WTC11 (cell line): ENCODE measurements at regions of chr12 and their contacts with region 1.

Region 1: DNA sequence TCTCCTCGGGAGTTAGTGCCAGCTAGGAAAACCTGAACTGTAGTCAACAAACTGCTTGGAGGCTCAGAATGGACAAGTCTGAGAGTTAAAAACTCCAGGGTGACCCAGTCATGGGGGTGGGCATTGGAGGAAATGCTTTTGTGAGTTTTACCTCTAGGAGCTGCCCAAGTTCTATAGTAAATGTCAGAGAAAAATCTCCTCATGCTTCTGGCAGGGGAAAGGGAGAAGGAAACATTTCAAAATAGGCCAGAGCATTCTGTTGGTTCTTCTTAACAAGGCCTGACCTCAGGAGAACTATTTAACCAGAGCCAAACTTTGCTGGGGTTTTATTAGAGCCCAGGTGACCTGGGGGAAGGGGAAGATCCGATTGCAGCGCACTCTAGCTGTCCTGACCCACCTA is 12.3 kb downstream of the NINJ2 start:
- DNase-seq: no peak
- ATAC-seq: no peak
- H3K4me3 Mint-ChIP-seq: no peak overlapping the region
- H3K27ac Mint-ChIP-seq: no peak overlapping the region
- H3K4me1 Mint-ChIP-seq: no peaks in the 10 kb centered on the region
- H3K27me3 Mint-ChIP-seq: no peaks in the 10 kb centered on the region
- CTCF ChIP-seq: no peak

Region 2: GRCh38 chr12:607526-608001 is 43.4 kb before region 1 on chr12:
- CTCF ChIA-PET with region 1: no interaction called
- POLR2A ChIA-PET with region 1: no interaction called
- DNase-seq: no peak
- ATAC-seq: peak; percentile 62
- H3K4me3 Mint-ChIP-seq: no peak overlapping the region
- H3K27ac Mint-ChIP-seq: no peak overlapping the region
- H3K4me1 Mint-ChIP-seq: no peaks in the 10 kb centered on the region; the same call in 1 of the 2 replicates
- H3K27me3 Mint-ChIP-seq: no peaks in the 10 kb centered on the region; the same call in 1 of the 2 replicates
- CTCF ChIP-seq: no peak

Region 3: DNA sequence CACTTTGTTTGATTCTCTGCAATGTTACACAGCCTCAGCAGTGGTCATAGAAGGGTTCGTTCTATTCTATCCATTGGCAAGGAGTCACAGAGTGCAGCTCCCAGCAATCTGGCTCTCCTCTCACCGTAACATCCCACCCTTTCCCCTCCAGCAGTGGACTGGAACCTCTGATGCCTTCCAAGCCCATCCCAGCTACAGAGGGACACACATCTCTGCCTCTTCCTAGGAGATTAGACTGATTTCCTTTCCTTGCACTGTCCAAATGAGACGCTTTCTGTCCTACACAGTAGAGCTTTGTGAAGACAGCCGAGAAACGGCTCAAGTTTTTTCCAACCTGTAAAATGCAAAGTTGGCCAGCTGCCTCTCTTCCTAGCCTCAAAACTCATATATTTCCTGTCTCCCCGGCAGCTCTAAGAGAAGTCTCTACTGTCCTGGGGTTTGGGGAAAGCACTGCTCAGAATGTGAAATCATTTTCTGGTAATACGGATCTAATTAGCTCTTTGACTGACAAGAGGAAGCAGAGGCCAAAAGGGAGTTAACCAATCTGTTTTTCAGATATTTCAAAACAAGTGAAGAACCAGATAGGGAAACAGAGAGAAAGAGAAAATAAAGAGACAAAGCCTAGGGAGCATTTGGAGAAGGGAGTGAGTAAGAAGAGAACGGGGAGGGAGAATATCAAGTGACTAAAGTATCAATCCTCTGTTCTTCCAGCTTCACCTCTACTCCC is 11.7 kb after region 1 on chr12:
- CTCF ChIA-PET with region 1: interaction called, 3 read pairs
- POLR2A ChIA-PET with region 1: interaction called, 11 read pairs
- DNase-seq: no peak
- ATAC-seq: no peak
- H3K4me3 Mint-ChIP-seq: no peak overlapping the region
- H3K27ac Mint-ChIP-seq: no peak overlapping the region
- H3K4me1 Mint-ChIP-seq: peaks cover 19% of the 10 kb centered on the region
- H3K27me3 Mint-ChIP-seq: no peaks in the 10 kb centered on the region
- CTCF ChIP-seq: no peak